HEK293T (cell line): ENCODE measurements at regions of chr1 and their contacts with region 1.

Region 1: GRCh38 chr1:23184212-23184934 is 15.7 kb upstream of the LUZP1 start:
- DNase-seq: peak; percentile 62

Region 2: DNA sequence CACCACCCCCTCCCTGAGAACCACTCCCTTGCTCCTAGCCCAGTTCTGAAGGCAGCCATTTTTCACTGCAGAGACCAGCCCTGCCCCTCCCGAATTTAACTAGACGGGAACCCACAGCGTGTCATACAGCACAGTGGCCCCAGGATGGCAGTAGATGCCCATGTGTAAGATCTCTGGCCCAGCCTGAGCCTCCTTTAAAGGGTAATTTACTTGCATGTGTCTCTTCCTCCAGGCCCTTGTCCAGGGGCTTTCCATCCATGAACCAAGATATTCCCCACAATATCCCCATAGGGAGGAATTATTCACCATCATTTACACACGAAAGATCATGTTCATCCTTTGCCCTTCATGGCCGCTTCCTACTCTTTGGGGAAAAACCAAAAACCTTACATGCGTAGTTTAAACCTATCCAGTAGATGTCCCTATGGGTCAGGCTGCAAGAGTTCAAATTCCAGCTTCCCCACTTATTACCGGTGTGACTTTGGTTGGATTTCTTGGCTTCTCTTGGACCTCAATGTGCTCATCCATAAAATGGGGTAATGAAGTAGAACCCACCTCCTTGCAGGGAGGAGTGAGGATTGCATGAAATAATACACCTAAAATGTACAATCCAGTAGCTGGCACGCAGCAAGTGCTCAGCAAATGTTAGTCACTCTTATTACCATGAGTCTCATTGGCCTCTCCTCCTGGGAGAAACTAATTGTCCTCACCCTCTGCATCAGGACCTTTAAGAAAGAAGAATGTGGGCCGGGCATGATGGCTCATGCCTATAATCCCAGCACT is 207.7 kb before region 1 on chr1:
- CTCF ChIA-PET with region 1: interaction called, 16 read pairs
- POLR2A ChIA-PET with region 1: interaction called, 4 read pairs
- DNase-seq: peak; percentile 81

Region 3: GRCh38 chr1:23156945-23157344 is 27.4 kb before region 1 on chr1:
- CTCF ChIA-PET with region 1: no interaction called
- POLR2A ChIA-PET with region 1: no interaction called
- DNase-seq: no peak

Region 4: DNA sequence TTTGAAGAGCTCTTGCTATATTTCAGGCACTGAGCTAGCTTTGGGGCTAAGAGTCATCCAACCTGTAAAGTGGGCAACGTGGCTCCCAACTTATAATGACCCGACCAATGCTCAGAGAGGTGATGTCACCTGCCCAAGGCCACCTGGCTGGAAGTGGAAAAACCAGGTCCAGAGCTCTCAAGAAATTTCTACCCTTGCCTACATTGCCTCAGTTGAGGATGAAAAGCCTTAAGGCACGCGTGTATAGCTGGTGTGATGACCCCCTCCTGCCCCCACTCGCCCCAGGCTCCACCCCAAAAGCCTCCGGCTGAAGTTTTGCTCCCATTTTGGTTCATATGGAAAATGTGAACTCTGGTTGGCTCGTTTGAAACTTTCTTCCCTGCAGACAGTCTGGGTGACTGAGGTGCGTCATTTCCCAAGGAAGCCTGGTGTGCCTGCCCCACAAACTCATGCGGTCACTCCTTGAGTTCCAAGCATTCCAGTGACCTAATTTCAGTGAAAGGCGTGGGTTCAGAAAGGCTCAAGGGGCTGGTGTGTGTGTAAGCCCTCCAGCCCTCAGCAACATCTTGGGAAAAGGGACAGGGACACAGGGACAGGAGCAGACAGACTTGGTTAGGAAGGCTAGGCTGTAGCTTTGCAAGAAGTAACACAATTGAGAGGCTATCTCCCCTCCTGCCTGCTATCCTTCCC is 12.4 kb after region 1 on chr1:
- CTCF ChIA-PET with region 1: interaction called, 32 read pairs
- POLR2A ChIA-PET with region 1: no interaction called
- DNase-seq: no peak